Lower leg skin (tissue), 4 donors: ENCODE measurements at regions of chr7 and their contacts with region 1.

Region 1: GRCh38 chr7:92833024-92833765 is 3.2 kb downstream of the CDK6 start:
- DNase-seq: peak; percentile 81 to 97
- H3K4me3 ChIP-seq: peak overlapping the region; percentile 72
- CTCF ChIP-seq: peak in 1 of 3 donors; percentile 70
- POLR2A ChIP-seq: no peak

Region 2: GRCh38 chr7:92621026-92621540 is 212.1 kb before region 1 on chr7:
- intact Hi-C with region 1: loop called (anchors 5 kb)
- DNase-seq: peak in 1 of 2 donors; percentile 49
- H3K4me3 ChIP-seq: no peak overlapping the region
- CTCF ChIP-seq: peak in 1 of 3 donors; percentile 21
- POLR2A ChIP-seq: no peak

Region 3: DNA sequence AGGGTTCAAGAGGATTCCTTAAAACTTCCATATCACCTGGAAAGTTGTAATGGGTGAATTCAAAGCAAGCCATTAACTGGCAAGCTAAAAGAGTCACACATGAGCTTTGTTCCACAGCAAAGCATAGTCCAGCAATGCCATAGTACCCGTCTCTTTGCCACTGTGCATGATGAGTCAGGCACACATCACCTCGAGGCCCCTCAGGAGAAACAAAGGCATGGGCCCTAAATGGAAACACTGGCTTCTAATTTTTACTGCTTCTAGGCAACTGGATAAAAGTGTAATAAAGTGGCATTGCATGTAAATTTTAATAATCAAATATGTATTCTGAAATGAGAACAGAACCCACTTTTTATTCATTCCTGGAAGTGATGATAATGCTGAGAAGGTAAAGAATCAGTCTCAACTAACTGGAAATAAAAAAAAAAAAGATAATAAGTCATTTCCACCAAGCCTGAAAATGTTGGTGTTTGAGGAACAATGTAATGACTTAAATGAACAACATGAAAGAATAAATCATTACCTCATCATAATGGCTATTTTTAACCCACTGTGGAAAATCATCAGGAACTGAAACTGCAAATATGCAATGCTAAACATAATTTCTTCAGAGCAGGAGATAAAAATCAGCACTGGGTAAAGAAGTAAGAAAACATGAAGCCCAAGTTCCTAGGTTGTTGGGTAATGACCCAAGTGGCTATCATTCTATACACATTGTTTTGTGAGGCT is 101.7 kb before region 1 on chr7:
- intact Hi-C with region 1: no loop called
- DNase-seq: no peak
- H3K4me3 ChIP-seq: no peak overlapping the region
- CTCF ChIP-seq: no peak
- POLR2A ChIP-seq: no peak